ENCODE measurements at regions of chr4 and their contacts with region 1.

Region 1: DNA sequence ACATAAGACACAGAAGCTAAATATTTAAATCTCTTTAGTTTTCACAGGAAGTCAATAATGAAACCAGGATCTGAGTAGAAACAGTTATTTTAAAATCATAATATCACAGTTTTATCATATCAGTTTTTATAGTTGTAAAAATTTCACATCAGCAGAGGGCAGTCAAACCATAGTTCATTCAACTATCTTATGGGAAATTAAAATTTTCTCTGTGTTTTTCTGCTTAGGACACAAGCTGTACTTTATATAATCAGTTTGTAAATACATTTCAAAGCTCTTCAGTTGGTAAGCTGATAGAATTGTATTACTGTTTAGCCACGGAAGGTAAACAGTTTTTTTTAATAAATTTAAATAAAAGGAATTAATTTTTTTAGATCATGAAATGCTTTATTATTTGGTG is 204.8 kb upstream of the NUDT6 start:
- DNase-seq: no peak
- H3K4me3 ChIP-seq: no peak overlapping the region
- H3K27ac ChIP-seq: peak overlapping the region; percentile 3
- H3K4me1 ChIP-seq: peaks cover 16% of the 10 kb centered on the region
- H3K27me3 ChIP-seq: no peaks in the 10 kb centered on the region
- CTCF ChIP-seq: peak; percentile 61

Region 2: GRCh38 chr4:123649645-123650391 is 522.6 kb after region 1 on chr4:
- intact Hi-C with region 1: loop called (anchors 10 kb)
- DNase-seq: no peak
- H3K4me3 ChIP-seq: peak overlapping the region; percentile 8
- H3K27ac ChIP-seq: peak overlapping the region; percentile 70
- H3K4me1 ChIP-seq: peaks cover 33% of the 10 kb centered on the region
- H3K27me3 ChIP-seq: no peaks in the 10 kb centered on the region
- CTCF ChIP-seq: no peak

Measured in left ventricle myocardium inferior (tissue), 1 donor.